HAP-1 (cell line): ENCODE measurements at regions of chrX and their contacts with region 1.

Region 1: DNA sequence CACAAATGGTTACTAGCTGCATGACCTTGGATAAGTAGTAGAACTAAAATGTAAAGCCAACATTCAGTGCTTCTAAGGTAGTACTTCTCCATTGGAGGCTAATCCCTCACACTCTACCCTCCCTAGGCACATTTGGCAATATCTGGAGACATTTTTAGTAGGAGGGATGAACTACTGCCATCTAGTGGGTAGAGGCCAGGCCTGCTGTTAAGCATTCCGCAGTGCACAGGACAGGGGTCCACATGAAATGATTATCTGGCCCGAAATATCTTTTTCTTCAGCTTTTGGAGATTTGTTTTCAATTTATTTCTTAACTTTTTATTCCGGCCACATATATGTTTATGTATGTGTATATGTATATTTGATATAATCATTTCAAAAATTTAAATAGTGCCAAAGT is 36.0 kb upstream of the SPANXC start:
- DNase-seq: peak; percentile 33 to 56
- H3K4me3 ChIP-seq: no peak overlapping the region
- H3K4me1 ChIP-seq: peaks cover 9% of the 10 kb centered on the region
- H3K27me3 ChIP-seq: peaks cover 7% of the 10 kb centered on the region; the same call in 1 of the 2 replicates

Region 2: GRCh38 chrX:140762061-140762460 is 516.2 kb before region 1 on chrX:
- in situ Hi-C with region 1: loop called (anchors 25 kb)
- DNase-seq: peak; percentile 74 to 79
- H3K4me3 ChIP-seq: no peak overlapping the region
- H3K4me1 ChIP-seq: peaks cover 12% of the 10 kb centered on the region
- H3K27me3 ChIP-seq: no peaks in the 10 kb centered on the region

Region 3: DNA sequence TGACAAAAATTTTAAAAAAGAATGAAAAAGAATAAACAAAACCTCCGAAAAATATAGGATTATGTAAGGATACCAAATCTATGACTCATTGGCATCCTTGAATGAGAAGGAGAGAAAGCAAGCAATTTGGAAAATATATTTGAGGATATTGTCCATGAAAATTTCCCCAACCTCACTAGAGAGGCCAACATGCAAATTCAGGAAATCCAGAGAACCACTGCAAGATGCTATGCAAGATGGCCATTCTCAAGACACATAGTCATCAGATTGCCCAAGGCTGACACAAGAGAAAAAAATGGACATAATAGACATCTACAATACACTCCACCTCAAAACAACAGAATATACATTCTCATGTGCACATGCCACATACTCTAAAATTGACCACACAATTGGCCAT is 411.9 kb before region 1 on chrX:
- in situ Hi-C with region 1: no loop called
- DNase-seq: no peak
- H3K4me3 ChIP-seq: no peak overlapping the region
- H3K4me1 ChIP-seq: no peaks in the 10 kb centered on the region
- H3K27me3 ChIP-seq: no peaks in the 10 kb centered on the region

Region 4: DNA sequence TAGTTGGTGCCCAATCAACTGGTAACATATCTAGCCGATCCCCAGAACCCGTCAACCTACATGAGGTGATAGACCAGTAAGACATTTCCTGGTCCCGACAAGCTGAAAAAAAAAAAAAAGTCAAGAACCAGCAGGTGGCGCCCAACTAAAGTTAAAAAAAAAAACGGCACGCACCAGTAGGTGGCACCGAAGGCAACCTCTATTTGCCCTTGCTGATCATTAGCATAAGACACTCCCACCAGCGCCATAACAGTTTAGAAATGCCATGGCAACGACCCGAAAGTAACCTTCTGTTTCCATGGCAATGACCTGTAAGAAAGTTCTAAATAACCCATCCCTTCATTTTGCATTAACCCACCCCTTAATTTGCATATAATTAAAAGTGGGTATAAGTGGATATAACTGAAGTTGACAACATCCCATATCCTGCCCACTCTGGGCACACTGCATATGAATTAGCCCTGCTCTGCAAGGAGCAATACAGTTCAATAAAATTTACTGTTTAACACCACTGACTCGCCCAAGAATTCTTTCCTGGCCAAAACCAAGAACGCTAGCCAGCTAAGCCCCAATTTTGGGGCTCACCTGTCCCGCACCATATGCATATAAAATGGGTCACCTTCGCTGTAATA is 359.8 kb before region 1 on chrX:
- in situ Hi-C with region 1: loop called (anchors 25 kb)
- DNase-seq: peak; percentile 77 to 79
- H3K4me3 ChIP-seq: no peak overlapping the region
- H3K4me1 ChIP-seq: no peaks in the 10 kb centered on the region
- H3K27me3 ChIP-seq: no peaks in the 10 kb centered on the region